ENCODE measurements at regions of chr7 and their contacts with region 1.

Region 1: GRCh38 chr7:39894904-39895303 is 55.2 kb upstream of the CDK13 start:
- DNase-seq: no peak
- H3K4me3 ChIP-seq: no peak overlapping the region
- H3K27ac ChIP-seq: no peak overlapping the region
- H3K4me1 ChIP-seq: peaks cover 0 to 6% (median 5%) of the 10 kb centered on the region in 4 donors
- H3K27me3 ChIP-seq: peaks cover 0 to 5% (median 0%) of the 10 kb centered on the region in 4 donors
- CTCF ChIP-seq: no peak
- EP300 ChIP-seq: no peak
- POLR2A ChIP-seq: no peak

Region 2: DNA sequence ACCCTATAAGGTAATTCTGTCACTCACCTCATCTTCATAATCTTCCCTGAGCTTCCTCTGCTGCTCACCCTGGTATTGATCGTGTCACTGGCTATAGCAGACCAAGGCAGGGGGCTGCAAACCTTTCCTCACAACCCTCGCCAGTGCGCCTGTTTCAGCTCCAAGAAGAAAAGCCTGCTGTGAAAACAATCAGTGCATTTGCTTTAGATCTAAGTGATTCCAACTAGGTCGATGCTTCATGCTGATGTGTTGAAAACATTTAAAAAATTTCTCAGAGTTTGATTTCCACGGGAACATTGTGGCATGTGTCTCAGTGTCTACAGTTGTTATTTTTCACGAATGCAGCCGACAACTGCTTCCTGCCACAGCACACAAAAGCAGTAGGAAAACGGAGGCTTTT is 889.9 kb before region 1 on chr7:
- intact Hi-C with region 1: no loop called
- DNase-seq: no peak
- H3K4me3 ChIP-seq: no peak overlapping the region
- H3K27ac ChIP-seq: no peak overlapping the region
- H3K4me1 ChIP-seq: no peaks in the 10 kb centered on the region
- H3K27me3 ChIP-seq: no peaks in the 10 kb centered on the region
- CTCF ChIP-seq: no peak
- EP300 ChIP-seq: no peak
- POLR2A ChIP-seq: no peak

Region 3: GRCh38 chr7:40033826-40034225 is 138.9 kb after region 1 on chr7:
- intact Hi-C with region 1: no loop called
- DNase-seq: no peak
- H3K4me3 ChIP-seq: no peak overlapping the region
- H3K27ac ChIP-seq: no peak overlapping the region
- H3K4me1 ChIP-seq: peaks cover 0 to 13% (median 9%) of the 10 kb centered on the region in 4 donors
- H3K27me3 ChIP-seq: no peaks in the 10 kb centered on the region
- CTCF ChIP-seq: no peak
- EP300 ChIP-seq: no peak
- POLR2A ChIP-seq: no peak

Region 4: DNA sequence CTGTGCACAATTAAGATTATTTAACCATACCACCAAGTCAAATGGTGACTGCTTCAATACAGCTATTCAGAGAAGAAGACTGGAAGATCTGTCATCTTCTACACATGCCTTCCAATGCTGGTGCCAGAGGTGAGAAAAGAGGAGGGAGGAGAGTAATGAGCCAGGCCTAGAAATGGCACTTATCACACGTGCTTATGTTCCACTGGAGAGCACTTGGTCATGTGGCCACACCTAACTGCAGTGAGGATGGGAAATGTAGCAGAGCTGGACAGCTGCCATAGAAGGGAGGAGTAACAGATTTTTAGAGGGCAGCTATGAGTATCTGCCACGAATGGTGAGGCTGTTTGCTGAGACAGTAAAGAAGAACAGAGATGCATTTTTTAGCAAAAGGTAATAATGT is 162.4 kb after region 1 on chr7:
- intact Hi-C with region 1: loop called (anchors 2 kb)
- DNase-seq: no peak
- H3K4me3 ChIP-seq: no peak overlapping the region
- H3K27ac ChIP-seq: no peak overlapping the region
- H3K4me1 ChIP-seq: peaks cover 0 to 22% (median 20%) of the 10 kb centered on the region in 4 donors
- H3K27me3 ChIP-seq: no peaks in the 10 kb centered on the region
- CTCF ChIP-seq: no peak
- EP300 ChIP-seq: no peak
- POLR2A ChIP-seq: no peak